Natural killer cell (primary cell): ENCODE measurements at regions of chr6 and their contacts with region 1.

Region 1: DNA sequence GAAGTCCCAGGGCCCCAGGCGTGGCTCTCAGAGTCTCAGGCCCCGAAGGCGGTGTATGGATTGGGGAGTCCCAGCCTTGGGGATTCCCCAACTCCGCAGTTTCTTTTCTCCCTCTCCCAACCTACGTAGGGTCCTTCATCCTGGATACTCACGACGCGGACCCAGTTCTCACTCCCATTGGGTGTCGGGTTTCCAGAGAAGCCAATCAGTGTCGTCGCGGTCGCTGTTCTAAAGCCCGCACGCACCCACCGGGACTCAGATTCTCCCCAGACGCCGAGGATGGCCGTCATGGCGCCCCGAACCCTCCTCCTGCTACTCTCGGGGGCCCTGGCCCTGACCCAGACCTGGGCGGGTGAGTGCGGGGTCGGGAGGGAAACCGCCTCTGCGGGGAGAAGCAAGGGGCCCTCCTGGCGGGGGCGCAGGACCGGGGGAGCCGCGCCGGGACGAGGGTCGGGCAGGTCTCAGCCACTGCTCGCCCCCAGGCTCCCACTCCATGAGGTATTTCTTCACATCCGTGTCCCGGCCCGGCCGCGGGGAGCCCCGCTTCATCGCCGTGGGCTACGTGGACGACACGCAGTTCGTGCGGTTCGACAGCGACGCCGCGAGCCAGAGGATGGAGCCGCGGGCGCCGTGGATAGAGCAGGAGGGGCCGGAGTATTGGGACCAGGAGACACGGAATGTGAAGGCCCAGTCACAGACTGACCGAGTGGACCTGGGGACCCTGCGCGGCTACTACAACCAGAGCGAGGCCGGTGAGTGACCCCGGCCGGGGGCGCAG is at the start of gene HLA-A:
- DNase-seq: peak; percentile 95 to 98
- ATAC-seq: peak; percentile 80 to 91 (median 84)
- H3K4me3 ChIP-seq: peak within 1 kb of the TSS; percentile 57
- H3K4me3 Mint-ChIP-seq: peak within 1 kb of the TSS; percentile 99
- H3K27ac ChIP-seq: peak within 1 kb of the TSS; percentile 93
- H3K27ac Mint-ChIP-seq: peak within 1 kb of the TSS; percentile 89 to 100
- H3K4me1 ChIP-seq: peaks cover 36% of the 10 kb centered on the region
- H3K4me1 Mint-ChIP-seq: peaks cover 62 to 69% of the 10 kb centered on the region in 2 donors
- H3K27me3 ChIP-seq: no peaks in the 10 kb centered on the region
- H3K27me3 Mint-ChIP-seq: peaks cover 0 to 4% of the 10 kb centered on the region in 2 donors
- CTCF ChIP-seq: no peak
- total RNA-seq, gene HLA-A: 2,088 to 2,855 (median 2,731) TPM

Region 2: GRCh38 chr6:29628419-29629281 is 313.8 kb before region 1 on chr6:
- intact Hi-C with region 1: no loop called
- DNase-seq: peak; percentile 30 to 76
- ATAC-seq: peak; percentile 49 to 60 (median 59)
- H3K4me3 ChIP-seq: peak overlapping the region; percentile 76
- H3K4me3 Mint-ChIP-seq: peak overlapping the region; percentile 90
- H3K27ac ChIP-seq: no peak overlapping the region
- H3K27ac Mint-ChIP-seq: peak overlapping the region in 1 of 2 donors; percentile 6
- H3K4me1 ChIP-seq: peaks cover 37% of the 10 kb centered on the region
- H3K4me1 Mint-ChIP-seq: peaks cover 19 to 38% of the 10 kb centered on the region in 2 donors
- H3K27me3 ChIP-seq: peaks cover 24% of the 10 kb centered on the region
- H3K27me3 Mint-ChIP-seq: peaks cover 42 to 65% of the 10 kb centered on the region in 2 donors
- CTCF ChIP-seq: peak; percentile 44

Region 3: GRCh38 chr6:29723262-29723665 is 219.2 kb before region 1 on chr6 and contains the start of gene HLA-F:
- intact Hi-C with region 1: loop called (anchors 10 kb)
- DNase-seq: peak; percentile 81 to 97
- ATAC-seq: peak; percentile 80 to 91 (median 86)
- H3K4me3 ChIP-seq: peak within 1 kb of the TSS; percentile 88
- H3K4me3 Mint-ChIP-seq: peak within 1 kb of the TSS; percentile 94
- H3K27ac ChIP-seq: peak within 1 kb of the TSS; percentile 96
- H3K27ac Mint-ChIP-seq: peak within 1 kb of the TSS; percentile 79 to 94
- H3K4me1 ChIP-seq: peaks cover 47% of the 10 kb centered on the region
- H3K4me1 Mint-ChIP-seq: peaks cover 50 to 64% of the 10 kb centered on the region in 2 donors
- H3K27me3 ChIP-seq: no peaks in the 10 kb centered on the region
- H3K27me3 Mint-ChIP-seq: no peaks in the 10 kb centered on the region
- CTCF ChIP-seq: no peak
- total RNA-seq, gene HLA-F: 1,031 to 1,621 (median 1,125) TPM

Region 4: DNA sequence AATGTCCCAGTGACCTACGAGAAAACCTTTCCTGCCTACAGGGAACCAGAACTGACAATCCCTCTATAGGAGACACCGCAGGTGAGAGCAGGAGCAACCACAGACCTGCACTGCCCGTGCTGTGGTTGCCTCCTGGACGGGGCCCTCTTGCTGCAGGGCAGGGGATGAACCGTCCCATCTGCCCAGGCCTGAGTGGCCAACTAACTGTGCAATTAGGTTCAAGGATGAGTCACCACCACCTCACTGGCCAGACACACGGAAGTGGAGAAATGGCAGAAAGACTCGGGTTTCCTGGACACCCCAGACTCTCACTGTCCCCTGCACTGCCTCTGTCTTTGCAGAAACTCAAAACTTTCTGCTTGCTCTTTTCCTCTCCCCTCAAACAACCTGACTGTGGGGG is 128.7 kb before region 1 on chr6:
- intact Hi-C with region 1: no loop called
- DNase-seq: no peak
- ATAC-seq: no peak
- H3K4me3 ChIP-seq: no peak overlapping the region
- H3K4me3 Mint-ChIP-seq: no peak overlapping the region
- H3K27ac ChIP-seq: no peak overlapping the region
- H3K27ac Mint-ChIP-seq: no peak overlapping the region
- H3K4me1 ChIP-seq: no peaks in the 10 kb centered on the region
- H3K4me1 Mint-ChIP-seq: peaks cover 0 to 5% of the 10 kb centered on the region in 2 donors
- H3K27me3 ChIP-seq: peaks cover 2% of the 10 kb centered on the region
- H3K27me3 Mint-ChIP-seq: peaks cover 17 to 23% of the 10 kb centered on the region in 2 donors
- CTCF ChIP-seq: no peak

Region 5: GRCh38 chr6:29887819-29888776 is 54.4 kb before region 1 on chr6:
- intact Hi-C with region 1: loop called (anchors 1 kb)
- DNase-seq: peak; percentile 90 to 92
- ATAC-seq: peak; percentile 75 to 91 (median 77)
- H3K4me3 ChIP-seq: peak overlapping the region; percentile 92
- H3K4me3 Mint-ChIP-seq: peak overlapping the region; percentile 94
- H3K27ac ChIP-seq: peak overlapping the region; percentile 97
- H3K27ac Mint-ChIP-seq: peak overlapping the region; percentile 94 to 99
- H3K4me1 ChIP-seq: peaks cover 19% of the 10 kb centered on the region
- H3K4me1 Mint-ChIP-seq: peaks cover 12 to 30% of the 10 kb centered on the region in 2 donors
- H3K27me3 ChIP-seq: no peaks in the 10 kb centered on the region
- H3K27me3 Mint-ChIP-seq: no peaks in the 10 kb centered on the region
- CTCF ChIP-seq: no peak

Region 6: DNA sequence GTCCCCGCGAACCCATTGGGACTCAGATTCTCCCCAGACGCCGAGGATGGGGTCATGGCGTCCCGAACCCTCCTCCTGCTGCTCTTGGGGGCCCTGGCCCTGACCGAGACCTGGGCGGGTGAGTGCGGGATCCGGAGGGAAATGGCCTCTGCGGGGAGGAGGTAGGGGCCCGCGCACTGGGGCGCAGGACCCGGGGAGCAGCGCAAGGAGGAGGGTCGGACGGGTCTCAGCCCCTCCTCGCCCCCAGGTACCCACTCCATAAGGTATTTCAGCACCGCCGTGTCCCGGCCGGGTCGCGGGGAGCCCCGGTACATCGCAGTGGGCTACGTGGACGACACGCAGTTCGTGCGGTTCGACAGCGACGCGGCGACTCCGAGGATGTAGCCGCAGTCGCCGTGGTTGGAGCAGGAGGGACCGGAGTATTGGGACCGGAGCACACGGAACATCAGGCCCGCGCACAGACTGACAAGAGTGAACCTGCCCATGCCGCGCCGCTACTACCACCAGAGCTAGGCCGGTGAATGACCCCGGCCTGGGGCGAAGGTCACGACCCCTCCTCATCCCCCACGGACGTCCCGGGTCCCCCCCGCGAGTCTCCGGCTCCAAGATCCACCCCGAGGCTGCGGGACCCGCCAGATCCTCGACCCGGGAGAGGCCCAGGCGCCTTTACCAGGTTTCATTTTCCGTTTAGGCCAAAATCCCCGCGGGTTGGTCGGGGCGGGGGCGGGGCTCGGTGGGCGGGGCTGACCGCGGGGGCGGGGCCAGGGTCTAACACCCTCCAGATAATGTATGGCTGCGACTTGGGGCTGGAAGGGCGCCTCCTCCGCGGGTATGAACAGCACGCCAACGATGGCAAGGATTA is 15.8 kb before region 1 on chr6:
- intact Hi-C with region 1: loop called (anchors 1 kb)
- DNase-seq: peak; percentile 76 to 92
- ATAC-seq: peak; percentile 86 to 95 (median 88)
- H3K4me3 ChIP-seq: peak overlapping the region; percentile 86
- H3K4me3 Mint-ChIP-seq: peak overlapping the region; percentile 88
- H3K27ac ChIP-seq: peak overlapping the region; percentile 98
- H3K27ac Mint-ChIP-seq: peak overlapping the region; percentile 90 to 91
- H3K4me1 ChIP-seq: peaks cover 17% of the 10 kb centered on the region
- H3K4me1 Mint-ChIP-seq: peaks cover 6 to 28% of the 10 kb centered on the region in 2 donors
- H3K27me3 ChIP-seq: no peaks in the 10 kb centered on the region
- H3K27me3 Mint-ChIP-seq: no peaks in the 10 kb centered on the region
- CTCF ChIP-seq: no peak

Region 7: GRCh38 chr6:29976588-29977424 is 34.3 kb after region 1 on chr6:
- intact Hi-C with region 1: loop called (anchors 5 kb)
- DNase-seq: peak; percentile 46 to 79
- ATAC-seq: peak; percentile 79 to 84 (median 84)
- H3K4me3 ChIP-seq: peak overlapping the region; percentile 40
- H3K4me3 Mint-ChIP-seq: peak overlapping the region; percentile 94
- H3K27ac ChIP-seq: no peak overlapping the region
- H3K27ac Mint-ChIP-seq: peak overlapping the region in 1 of 2 donors; percentile 84
- H3K4me1 ChIP-seq: peaks cover 35% of the 10 kb centered on the region
- H3K4me1 Mint-ChIP-seq: peaks cover 44 to 48% of the 10 kb centered on the region in 2 donors
- H3K27me3 ChIP-seq: peaks cover 33% of the 10 kb centered on the region
- H3K27me3 Mint-ChIP-seq: peaks cover 42 to 51% of the 10 kb centered on the region in 2 donors
- CTCF ChIP-seq: no peak

Region 8: DNA sequence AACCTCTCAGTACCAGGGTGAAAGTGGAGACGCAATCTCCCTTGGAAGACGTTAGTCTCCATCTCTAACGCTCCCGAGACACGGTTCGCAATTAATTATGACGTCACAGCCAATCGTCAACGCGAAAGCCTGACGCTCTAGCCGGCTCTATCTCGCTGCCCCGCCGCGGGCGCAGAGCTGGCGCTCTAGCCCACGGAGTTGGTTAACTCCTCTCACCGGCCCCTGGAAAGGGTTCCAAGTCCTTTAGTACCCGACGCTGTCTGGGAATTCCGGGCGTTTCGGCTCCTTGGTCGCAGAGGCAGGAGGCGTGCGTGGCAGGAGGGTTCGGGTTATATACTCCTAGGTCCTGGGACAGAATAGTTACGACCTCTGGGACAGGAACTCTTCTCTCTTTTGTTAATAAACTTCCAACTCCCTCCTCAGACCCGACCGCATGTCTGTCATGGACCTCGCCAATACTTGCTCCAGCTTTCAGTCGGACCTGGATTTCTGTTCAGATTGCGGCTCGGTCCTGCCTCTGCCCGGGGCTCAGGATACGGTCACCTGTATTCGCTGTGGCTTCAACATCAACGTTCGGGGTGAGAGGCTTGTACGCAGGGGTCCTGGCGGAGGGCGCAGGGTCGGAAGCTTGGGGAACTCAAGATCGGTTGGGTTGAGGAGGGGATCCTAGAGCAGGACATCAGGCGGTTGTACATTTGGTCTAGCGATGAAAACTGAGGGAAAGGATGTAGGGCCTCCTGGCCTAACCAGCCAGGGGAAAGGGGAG is 118.8 kb after region 1 on chr6 and contains the start of gene POLR1H:
- intact Hi-C with region 1: loop called (anchors 5 kb)
- DNase-seq: peak; percentile 82 to 96
- ATAC-seq: peak; percentile 82 to 95 (median 88)
- H3K4me3 ChIP-seq: peak within 1 kb of the TSS; percentile 85
- H3K4me3 Mint-ChIP-seq: peak within 1 kb of the TSS; percentile 99
- H3K27ac ChIP-seq: peak within 1 kb of the TSS; percentile 94
- H3K27ac Mint-ChIP-seq: peak within 1 kb of the TSS; percentile 98 to 99
- H3K4me1 ChIP-seq: peaks cover 29% of the 10 kb centered on the region
- H3K4me1 Mint-ChIP-seq: peaks cover 34 to 38% of the 10 kb centered on the region in 2 donors
- H3K27me3 ChIP-seq: no peaks in the 10 kb centered on the region
- H3K27me3 Mint-ChIP-seq: no peaks in the 10 kb centered on the region
- CTCF ChIP-seq: no peak
- total RNA-seq, gene POLR1H: 21.0 to 36.2 (median 28.5) TPM

Region 9: DNA sequence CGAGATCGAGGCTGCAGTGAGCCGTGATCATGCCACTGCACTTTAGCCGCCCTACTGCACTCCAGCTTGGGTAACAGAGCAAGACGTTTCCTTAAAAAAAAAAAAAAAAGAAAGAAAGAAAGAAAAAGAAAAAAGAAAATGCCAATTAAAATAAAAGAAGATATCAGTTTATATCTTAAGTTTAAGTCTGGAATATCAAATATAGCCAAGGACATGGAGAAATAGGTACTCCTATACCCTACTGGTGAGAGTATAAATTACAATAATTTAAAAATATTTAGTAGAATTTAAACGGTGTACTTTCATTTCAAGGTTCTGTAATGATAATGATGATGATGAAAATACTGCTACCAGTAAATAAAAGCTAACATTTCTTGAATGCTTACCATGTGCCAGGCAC is 174.3 kb after region 1 on chr6:
- intact Hi-C with region 1: no loop called
- DNase-seq: no peak
- ATAC-seq: no peak
- H3K4me3 ChIP-seq: no peak overlapping the region
- H3K4me3 Mint-ChIP-seq: no peak overlapping the region
- H3K27ac ChIP-seq: no peak overlapping the region
- H3K27ac Mint-ChIP-seq: no peak overlapping the region
- H3K4me1 ChIP-seq: no peaks in the 10 kb centered on the region
- H3K4me1 Mint-ChIP-seq: no peaks in the 10 kb centered on the region
- H3K27me3 ChIP-seq: peaks cover 7% of the 10 kb centered on the region
- H3K27me3 Mint-ChIP-seq: peaks cover 20 to 44% of the 10 kb centered on the region in 2 donors
- CTCF ChIP-seq: peak; percentile 24